MCF 10A (cell line): ENCODE measurements at regions of chr6 and their contacts with region 1.

Region 1: DNA sequence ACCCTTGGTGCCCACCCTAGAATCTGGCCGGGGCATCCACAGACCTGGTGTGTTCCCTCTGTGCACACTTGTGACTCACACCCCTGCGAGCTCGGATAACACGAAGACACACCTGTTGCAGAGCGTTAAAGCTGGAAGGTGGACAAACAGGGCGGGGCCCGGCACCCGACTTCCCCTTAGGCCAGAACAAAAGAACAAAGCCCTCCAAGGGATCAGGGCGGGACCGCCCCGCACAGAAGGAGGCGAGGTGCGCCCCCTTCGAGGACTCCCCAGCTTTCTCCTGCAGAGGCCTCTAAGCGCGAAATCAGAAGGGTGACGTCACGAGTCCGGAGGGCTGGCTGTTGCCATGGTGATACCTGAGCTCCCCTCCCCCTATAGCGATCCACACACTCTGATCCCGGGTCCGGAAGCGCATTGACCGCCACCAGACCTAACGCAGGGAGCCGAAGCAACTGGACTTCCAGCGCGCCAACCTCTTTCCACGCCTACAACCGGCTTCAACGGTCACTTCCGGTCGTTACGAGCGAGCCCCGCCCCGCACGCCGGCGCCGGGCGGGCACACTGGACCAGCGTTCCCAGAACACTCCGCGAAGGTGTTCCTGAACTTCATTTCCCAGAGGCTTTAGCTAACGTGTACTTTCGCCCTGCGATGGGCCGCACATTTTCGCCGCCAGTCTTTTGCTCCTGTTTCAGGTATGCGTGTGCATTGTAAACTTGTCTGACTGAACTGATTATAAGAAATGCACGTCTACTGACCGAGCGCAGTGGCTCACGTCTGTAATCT is at the start of gene ZNF184:
- DNase-seq: peak; percentile 98
- H3K4me3 Mint-ChIP-seq: peak within 1 kb of the TSS; percentile 91
- H3K27ac Mint-ChIP-seq: peak within 1 kb of the TSS; percentile 83
- H3K4me1 Mint-ChIP-seq: peaks cover 25% of the 10 kb centered on the region
- H3K27me3 Mint-ChIP-seq: no peaks in the 10 kb centered on the region
- CTCF ChIP-seq: peak; percentile 17
- total RNA-seq, gene ZNF184: 8.9 and 10.1 TPM in 2 replicates

Region 2: GRCh38 chr6:26312501-26313390 is 1160.1 kb before region 1 on chr6:
- CTCF ChIA-PET with region 1: no interaction called
- POLR2A ChIA-PET with region 1: no interaction called
- intact Hi-C with region 1: loop called (anchors 10 kb)
- DNase-seq: peak; percentile 82
- H3K4me3 Mint-ChIP-seq: peak overlapping the region; percentile 79
- H3K27ac Mint-ChIP-seq: peak overlapping the region; percentile 74
- H3K4me1 Mint-ChIP-seq: peaks cover 26% of the 10 kb centered on the region
- H3K27me3 Mint-ChIP-seq: no peaks in the 10 kb centered on the region
- CTCF ChIP-seq: no peak

Region 3: GRCh38 chr6:27295301-27296081 is 177.3 kb before region 1 on chr6:
- CTCF ChIA-PET with region 1: interaction called, 3 read pairs
- POLR2A ChIA-PET with region 1: interaction called, 14 read pairs
- intact Hi-C with region 1: loop called (anchors 5 kb)
- DNase-seq: peak; percentile 87
- H3K4me3 Mint-ChIP-seq: peak overlapping the region; percentile 83
- H3K27ac Mint-ChIP-seq: peak overlapping the region; percentile 29
- H3K4me1 Mint-ChIP-seq: peaks cover 32% of the 10 kb centered on the region
- H3K27me3 Mint-ChIP-seq: no peaks in the 10 kb centered on the region
- CTCF ChIP-seq: no peak

Region 4: DNA sequence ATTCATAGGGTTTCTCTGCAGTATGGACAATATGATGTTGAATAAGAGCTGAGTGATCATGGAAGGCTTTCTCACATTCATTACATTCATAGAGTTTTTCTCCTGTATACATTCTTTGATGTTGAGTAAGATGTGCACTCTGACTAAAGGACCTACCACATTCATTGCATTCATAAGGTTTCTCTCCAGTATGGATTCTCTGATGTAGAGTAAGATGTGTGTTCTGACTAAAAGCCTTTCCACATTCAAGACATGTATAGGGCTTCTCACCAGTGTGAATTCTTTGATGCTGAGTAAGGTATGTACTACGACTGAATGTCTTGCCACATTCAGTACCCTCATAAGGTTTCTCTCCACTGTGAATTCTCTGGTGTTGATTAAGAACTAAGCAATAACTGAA is 113.6 kb before region 1 on chr6:
- CTCF ChIA-PET with region 1: no interaction called
- POLR2A ChIA-PET with region 1: no interaction called
- intact Hi-C with region 1: no loop called
- DNase-seq: no peak
- H3K4me3 Mint-ChIP-seq: no peak overlapping the region
- H3K27ac Mint-ChIP-seq: no peak overlapping the region
- H3K4me1 Mint-ChIP-seq: no peaks in the 10 kb centered on the region
- H3K27me3 Mint-ChIP-seq: no peaks in the 10 kb centered on the region
- CTCF ChIP-seq: no peak

Region 5: DNA sequence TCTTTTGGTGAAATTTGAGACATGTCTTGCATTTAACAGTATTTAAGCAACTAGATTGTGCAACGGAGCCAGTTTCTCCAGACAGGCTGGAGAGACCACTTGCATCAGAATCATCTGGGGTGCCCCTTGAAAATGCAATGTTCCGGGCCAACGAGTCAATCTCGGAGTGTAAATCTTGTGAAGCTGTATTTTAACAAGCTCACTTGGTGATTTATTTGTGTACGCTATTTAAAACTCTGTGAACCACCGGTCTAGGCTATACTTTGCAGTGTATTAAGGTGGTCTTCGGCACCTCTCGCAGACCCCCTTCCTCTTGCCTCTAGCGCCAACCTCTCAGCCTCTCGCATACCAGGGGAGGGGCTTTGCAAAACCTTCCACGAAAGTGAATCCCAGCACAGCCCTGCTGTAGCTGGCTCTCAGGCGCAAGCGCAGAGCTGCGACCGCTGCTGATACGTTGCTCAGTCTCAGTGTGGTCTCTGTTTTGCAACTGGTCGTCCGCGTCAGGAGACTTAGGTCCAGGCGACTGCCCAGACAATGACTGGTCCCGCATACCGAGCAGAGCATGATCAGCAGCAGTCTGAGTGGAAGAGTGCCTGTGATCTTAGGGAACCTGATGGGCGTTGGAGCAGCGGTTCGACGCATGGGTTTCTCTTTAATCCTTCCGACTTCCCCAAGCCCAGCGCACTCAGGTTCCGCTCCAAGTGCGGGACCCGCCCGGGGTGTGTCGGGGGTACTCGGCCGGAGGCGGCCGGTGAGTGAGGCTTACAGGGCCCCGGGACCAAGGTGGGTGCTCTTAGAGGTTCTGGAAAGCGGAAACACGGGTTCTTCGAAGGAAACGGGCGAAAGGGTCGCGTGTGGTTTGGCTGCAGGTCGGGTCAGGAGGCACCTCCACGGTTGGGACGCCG is 84.3 kb before region 1 on chr6 and contains the start of gene ZNF391:
- CTCF ChIA-PET with region 1: no interaction called
- POLR2A ChIA-PET with region 1: interaction called, 15 read pairs
- intact Hi-C with region 1: no loop called
- DNase-seq: peak; percentile 75
- H3K4me3 Mint-ChIP-seq: peak within 1 kb of the TSS; percentile 92
- H3K27ac Mint-ChIP-seq: peak within 1 kb of the TSS; percentile 90
- H3K4me1 Mint-ChIP-seq: peaks cover 12% of the 10 kb centered on the region
- H3K27me3 Mint-ChIP-seq: no peaks in the 10 kb centered on the region
- CTCF ChIP-seq: no peak
- total RNA-seq, gene ZNF391: 6.2 and 8.3 TPM in 2 replicates

Region 6: GRCh38 chr6:27608916-27609883 is 136.4 kb after region 1 on chr6:
- CTCF ChIA-PET with region 1: no interaction called
- POLR2A ChIA-PET with region 1: interaction called, 10 read pairs
- intact Hi-C with region 1: loop called (anchors 10 kb)
- DNase-seq: peak; percentile 89
- H3K4me3 Mint-ChIP-seq: peak overlapping the region; percentile 47
- H3K27ac Mint-ChIP-seq: peak overlapping the region; percentile 83
- H3K4me1 Mint-ChIP-seq: peaks cover 22% of the 10 kb centered on the region
- H3K27me3 Mint-ChIP-seq: no peaks in the 10 kb centered on the region
- CTCF ChIP-seq: peak; percentile 77

Region 7: DNA sequence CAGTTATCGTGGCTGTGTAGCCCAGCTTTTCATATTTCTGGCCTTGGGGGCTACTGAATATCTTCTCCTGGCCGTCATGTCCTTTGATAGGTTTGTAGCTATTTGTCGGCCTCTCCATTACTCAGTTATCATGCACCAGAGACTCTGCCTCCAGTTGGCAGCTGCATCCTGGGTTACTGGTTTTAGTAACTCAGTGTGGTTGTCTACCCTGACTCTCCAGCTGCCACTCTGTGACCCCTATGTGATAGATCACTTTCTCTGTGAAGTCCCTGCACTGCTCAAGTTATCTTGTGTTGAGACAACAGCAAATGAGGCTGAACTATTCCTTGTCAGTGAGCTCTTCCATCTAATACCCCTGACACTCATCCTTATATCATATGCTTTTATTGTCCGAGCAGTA is 484.7 kb after region 1 on chr6:
- CTCF ChIA-PET with region 1: no interaction called
- POLR2A ChIA-PET with region 1: no interaction called
- intact Hi-C with region 1: no loop called
- DNase-seq: no peak
- H3K4me3 Mint-ChIP-seq: no peak overlapping the region
- H3K27ac Mint-ChIP-seq: no peak overlapping the region
- H3K4me1 Mint-ChIP-seq: no peaks in the 10 kb centered on the region
- H3K27me3 Mint-ChIP-seq: peaks cover 59% of the 10 kb centered on the region
- CTCF ChIP-seq: no peak